Endothelial cell of umbilical vein (primary cell): ENCODE measurements at regions of chr7 and their contacts with region 1.

Region 1: DNA sequence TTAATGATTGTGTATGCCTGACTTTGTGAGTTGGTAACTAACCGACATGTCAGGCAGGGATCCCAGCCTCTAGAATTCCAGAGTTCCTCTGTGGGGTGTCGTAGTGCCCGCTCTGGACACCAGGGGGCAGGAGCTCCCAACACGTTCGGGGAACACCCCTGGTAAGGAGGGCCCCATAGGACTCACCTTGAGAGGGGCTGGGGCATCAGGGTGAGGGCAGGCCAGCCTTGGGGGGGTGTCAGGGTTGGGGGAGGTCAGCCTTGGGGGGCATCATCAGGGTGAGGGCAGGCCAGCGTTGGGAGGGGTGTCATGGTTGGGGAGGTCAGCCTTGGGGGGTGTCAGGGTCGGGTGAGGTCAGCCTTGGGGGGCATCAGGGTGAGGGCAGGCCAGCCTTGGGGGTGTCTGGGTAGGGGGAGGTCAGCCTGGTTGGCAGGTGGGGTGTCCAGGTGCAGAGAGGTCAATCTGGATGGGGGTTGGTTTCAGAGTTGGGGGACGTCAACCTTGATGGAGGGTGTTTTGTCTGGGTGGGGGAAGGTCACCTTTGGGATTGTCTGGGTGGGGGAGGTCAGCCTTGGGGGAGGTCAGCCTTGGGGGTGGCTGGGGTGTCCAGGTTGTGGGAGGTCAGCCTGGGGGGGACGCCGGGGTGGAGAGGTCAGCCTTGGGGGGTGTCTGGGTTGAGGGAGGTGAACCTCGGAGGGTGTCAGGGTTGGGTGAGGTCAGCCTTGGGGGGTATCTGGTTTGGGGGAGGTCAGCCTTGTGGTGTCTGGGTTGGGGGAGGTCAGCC is 45.6 kb upstream of the SUN1 start:
- DNase-seq: peak; percentile 57
- H3K4me3 ChIP-seq: no peak overlapping the region
- H3K27ac ChIP-seq: no peak overlapping the region
- H3K4me1 ChIP-seq: no peaks in the 10 kb centered on the region
- H3K27me3 ChIP-seq: no peaks in the 10 kb centered on the region
- CTCF ChIP-seq: peak; percentile 83 to 84
- POLR2A ChIP-seq: no peak

Region 2: GRCh38 chr7:831596-832166 is 45.0 kb after region 1 on chr7:
- CTCF ChIA-PET with region 1: interaction called, 21 read pairs
- POLR2A ChIA-PET with region 1: no interaction called
- dilution Hi-C with region 1: no loop called
- intact Hi-C with region 1: loop called (anchors 1 kb)
- DNase-seq: peak; percentile 93
- H3K4me3 ChIP-seq: peak overlapping the region in 2 of 3 experiments; percentile 12 to 49
- H3K27ac ChIP-seq: peak overlapping the region; percentile 98
- H3K4me1 ChIP-seq: peaks cover 22% of the 10 kb centered on the region
- H3K27me3 ChIP-seq: no peaks in the 10 kb centered on the region
- CTCF ChIP-seq: no peak
- POLR2A ChIP-seq: no peak

Region 3: GRCh38 chr7:836411-837400 is 50.0 kb after region 1 on chr7:
- CTCF ChIA-PET with region 1: interaction called, 21 read pairs
- POLR2A ChIA-PET with region 1: no interaction called
- dilution Hi-C with region 1: no loop called
- intact Hi-C with region 1: loop called (anchors 1 kb)
- DNase-seq: peak; percentile 60
- H3K4me3 ChIP-seq: no peak overlapping the region
- H3K27ac ChIP-seq: no peak overlapping the region
- H3K4me1 ChIP-seq: peaks cover 14% of the 10 kb centered on the region
- H3K27me3 ChIP-seq: no peaks in the 10 kb centered on the region
- CTCF ChIP-seq: peak; percentile 67 to 77
- POLR2A ChIP-seq: no peak

Region 4: DNA sequence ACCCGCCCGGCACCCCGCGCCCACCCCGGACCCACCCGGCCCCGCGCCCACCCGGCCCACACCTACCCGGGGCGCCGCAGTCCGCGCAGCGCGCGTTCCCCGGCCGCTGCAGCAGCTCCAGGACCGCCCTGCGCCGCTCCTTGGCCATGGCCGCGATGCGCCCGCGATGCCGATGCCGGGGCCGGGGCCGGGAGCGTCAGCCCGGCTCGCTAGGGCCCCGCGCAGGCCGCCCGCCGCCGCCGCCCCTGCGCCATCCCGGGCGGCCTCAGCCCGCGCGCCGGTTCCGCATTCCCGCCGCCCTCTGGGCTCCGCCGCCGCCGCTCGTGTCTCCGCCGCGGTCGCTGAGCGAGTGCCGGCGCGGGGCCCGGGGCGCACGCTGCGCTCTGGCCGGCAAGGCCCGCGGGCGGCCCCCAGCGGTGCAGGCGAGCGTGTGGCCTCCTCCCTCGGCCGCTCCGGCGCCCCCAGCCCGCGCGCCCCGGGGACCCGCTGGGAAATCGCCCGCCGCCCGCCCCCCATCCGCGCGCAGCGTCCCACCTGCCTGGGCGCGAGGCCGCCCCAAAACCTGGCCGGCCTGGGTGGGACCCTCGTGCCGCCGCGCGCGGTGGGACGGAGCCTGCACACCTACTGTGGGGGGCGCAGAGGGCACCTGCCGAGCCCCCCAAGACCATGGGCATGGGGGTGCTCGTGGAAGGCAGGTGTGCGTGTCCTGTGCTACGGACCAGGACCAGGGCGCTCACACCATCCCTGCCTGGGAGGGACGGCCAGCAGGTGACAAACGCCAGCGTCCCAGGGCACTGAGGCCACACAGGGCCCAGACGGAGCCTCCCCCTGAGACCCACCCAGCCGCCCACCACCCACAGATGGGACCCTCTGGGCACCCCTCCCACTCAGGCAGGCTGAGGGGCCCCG is 167.9 kb after region 1 on chr7 and contains the start of gene ADAP1:
- CTCF ChIA-PET with region 1: interaction called, 3 read pairs
- POLR2A ChIA-PET with region 1: no interaction called
- dilution Hi-C with region 1: no loop called
- intact Hi-C with region 1: loop called (anchors 1 kb)
- DNase-seq: no peak
- H3K4me3 ChIP-seq: peak within 1 kb of the TSS in 1 of 3 experiments; percentile 30
- H3K27ac ChIP-seq: no peak within 1 kb of the TSS
- H3K4me1 ChIP-seq: no peaks in the 10 kb centered on the region
- H3K27me3 ChIP-seq: peaks cover 2 to 4% of the 10 kb centered on the region in 2 experiments
- CTCF ChIP-seq: peak in 1 of 2 donors; percentile 24
- POLR2A ChIP-seq: no peak
- total RNA-seq, gene ADAP1: 0.46 and 0.49 TPM in 2 replicates